Motor neuron (in vitro differentiated cells): ENCODE measurements at regions of chr18 and their contacts with region 1.

Region 1: DNA sequence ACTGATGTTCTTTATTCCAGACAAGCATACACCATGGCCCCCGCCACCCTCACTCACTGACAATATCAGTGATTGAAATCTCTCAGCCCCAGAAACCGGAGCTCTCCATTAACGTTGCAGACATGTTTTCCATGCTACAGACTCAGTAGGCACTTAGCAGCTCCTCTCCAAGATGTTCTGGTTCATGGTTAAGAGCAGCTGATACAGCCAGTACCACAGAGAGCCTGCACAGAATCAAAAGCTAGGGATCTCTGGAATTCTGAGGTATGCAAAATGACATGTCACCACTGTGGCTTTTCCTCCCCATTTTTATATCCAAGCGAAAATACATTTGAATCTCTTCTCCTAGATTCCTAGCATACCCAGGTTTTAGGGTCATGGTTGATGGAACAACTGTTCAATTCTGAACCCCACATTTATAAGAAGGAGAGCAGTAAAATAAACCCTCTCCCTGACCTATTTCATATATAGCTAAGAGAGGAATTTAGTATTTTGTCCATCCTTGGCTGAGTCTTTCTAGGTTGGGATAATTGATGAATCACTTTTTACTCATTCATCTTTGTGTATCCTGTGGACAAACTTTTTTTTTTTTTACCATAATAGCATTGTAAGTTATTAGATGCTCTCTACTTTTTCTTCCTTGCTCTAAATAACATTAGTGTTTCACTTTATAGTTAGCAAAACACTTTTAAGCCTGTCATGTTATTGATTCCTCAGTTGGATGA is 488.4 kb upstream of the PIK3C3 start:
- ATAC-seq: no peak
- H3K4me3 ChIP-seq: no peak overlapping the region
- H3K27ac ChIP-seq: no peak overlapping the region
- H3K4me1 ChIP-seq: peaks cover 2 to 5% of the 10 kb centered on the region in 2 donors

Region 2: GRCh38 chr18:41378598-41378997 is 88.0 kb before region 1 on chr18:
- in situ Hi-C with region 1: no loop called
- ATAC-seq: peak; percentile 54 to 93 (median 76)
- H3K4me3 ChIP-seq: no peak overlapping the region
- H3K27ac ChIP-seq: no peak overlapping the region
- H3K4me1 ChIP-seq: peaks cover 3 to 8% of the 10 kb centered on the region in 2 donors

Region 3: DNA sequence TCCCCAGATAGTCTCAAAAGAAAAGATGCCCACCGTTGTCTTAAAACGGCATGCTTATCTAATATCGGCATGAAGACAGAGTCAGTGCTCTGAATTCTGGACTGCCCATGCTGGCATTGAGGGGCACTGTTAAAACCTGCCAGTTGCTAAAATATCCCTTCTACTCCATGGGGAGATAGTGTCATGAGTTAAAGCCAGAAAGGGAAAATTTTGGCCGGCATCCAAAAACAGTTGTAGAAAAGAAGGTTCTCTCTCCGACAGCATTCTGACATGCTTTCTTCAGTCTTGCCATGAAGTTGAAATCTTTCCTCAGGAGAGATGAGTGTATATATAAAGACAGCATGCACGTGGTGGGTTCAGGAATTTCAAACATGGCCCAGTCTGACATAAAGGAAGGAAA is 87.1 kb after region 1 on chr18:
- in situ Hi-C with region 1: loop called in 1 of 9 experiments (anchors 25 kb)
- ATAC-seq: peak in 1 of 8 experiments; percentile 17
- H3K4me3 ChIP-seq: no peak overlapping the region
- H3K27ac ChIP-seq: no peak overlapping the region
- H3K4me1 ChIP-seq: peaks cover 0 to 3% of the 10 kb centered on the region in 2 donors